Transverse colon (tissue), 4 donors: ENCODE measurements at regions of chr17 and their contacts with region 1.

Region 1: GRCh38 chr17:27601069-27601975 is 29.7 kb upstream of the LGALS9 start:
- DNase-seq: peak; percentile 87
- H3K4me3 ChIP-seq: no peak overlapping the region
- H3K27ac ChIP-seq: no peak overlapping the region
- H3K4me1 ChIP-seq: peaks cover 0 to 19% (median 11%) of the 10 kb centered on the region in 4 donors
- H3K27me3 ChIP-seq: no peaks in the 10 kb centered on the region
- CTCF ChIP-seq: peak; percentile 92 to 96 (median 93)
- EP300 ChIP-seq: no peak
- POLR2A ChIP-seq: no peak

Region 2: DNA sequence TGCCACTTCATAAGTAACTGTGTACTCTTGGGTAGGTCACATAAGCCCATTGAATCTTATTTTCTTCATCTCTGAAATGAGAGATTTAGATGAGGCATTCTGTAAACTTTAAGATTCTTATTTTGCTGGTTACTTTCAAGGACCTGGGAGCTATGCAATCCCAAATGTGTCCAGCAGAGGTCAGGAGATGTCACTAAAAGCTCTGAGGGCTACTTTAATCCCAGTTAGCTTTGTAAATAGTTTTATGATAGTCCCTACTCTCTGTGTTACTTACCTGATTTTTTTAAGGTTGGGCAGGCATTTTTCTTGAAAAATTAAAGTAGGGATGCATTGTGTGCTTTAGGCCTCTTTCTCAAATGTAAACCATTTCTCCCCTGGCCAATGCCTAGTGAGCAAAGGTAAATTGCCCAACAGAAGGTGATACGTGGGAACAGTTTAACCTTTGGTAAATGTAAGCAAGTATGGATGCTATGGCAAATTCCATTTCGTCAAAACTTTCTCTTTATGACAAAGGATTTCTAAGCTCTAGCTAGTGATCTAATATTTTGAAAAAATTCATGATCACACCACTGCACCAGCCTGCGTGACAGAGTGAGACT is 364.5 kb before region 1 on chr17:
- in situ Hi-C with region 1: loop called (anchors 5 to 25 kb)
- intact Hi-C with region 1: loop called (anchors 10 kb)
- DNase-seq: peak; percentile 89
- H3K4me3 ChIP-seq: no peak overlapping the region
- H3K27ac ChIP-seq: no peak overlapping the region
- H3K4me1 ChIP-seq: peaks cover 0 to 17% (median 3%) of the 10 kb centered on the region in 4 donors
- H3K27me3 ChIP-seq: no peaks in the 10 kb centered on the region
- CTCF ChIP-seq: peak; percentile 91 to 94 (median 93)
- EP300 ChIP-seq: no peak
- POLR2A ChIP-seq: no peak

Region 3: DNA sequence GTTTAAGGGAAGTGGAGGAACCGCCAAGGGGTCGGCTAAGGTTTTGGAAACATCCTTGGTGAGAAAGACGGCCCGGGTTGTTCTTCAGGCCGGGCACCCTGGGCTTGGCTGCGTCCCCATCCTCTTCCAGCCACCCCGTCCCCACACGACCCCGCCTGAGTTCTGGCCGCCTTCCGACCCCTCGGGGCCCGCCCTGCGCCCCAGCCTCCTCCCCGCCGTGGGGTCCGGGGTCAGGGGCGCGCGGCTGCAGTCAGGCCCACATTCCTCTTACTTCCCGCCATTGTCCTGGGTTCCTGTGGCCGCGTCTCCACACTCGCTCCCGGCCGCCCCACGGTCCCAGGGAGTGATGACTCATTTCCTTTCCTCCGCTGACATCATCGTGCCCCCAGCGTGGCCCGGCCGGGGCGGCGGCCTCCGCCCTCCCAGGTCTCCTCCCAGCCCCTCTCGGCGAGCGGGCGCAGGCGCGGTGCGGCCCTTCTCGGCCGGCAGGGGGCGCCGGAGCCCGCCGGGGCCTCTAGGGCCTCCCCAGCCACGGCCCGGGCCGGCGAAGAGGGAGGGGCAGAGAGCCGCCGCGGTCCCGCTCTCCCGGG is 247.8 kb before region 1 on chr17:
- in situ Hi-C with region 1: loop called (anchors 5 to 10 kb)
- intact Hi-C with region 1: loop called (anchors 2 kb)
- DNase-seq: peak; percentile 93
- H3K4me3 ChIP-seq: peak overlapping the region; percentile 65 to 84 (median 80)
- H3K27ac ChIP-seq: peak overlapping the region; percentile 92 to 96 (median 94)
- H3K4me1 ChIP-seq: peaks cover 0 to 21% (median 12%) of the 10 kb centered on the region in 4 donors
- H3K27me3 ChIP-seq: no peaks in the 10 kb centered on the region
- CTCF ChIP-seq: peak; percentile 48 to 98 (median 87)
- EP300 ChIP-seq: peak; percentile 41
- POLR2A ChIP-seq: peak; percentile 88

Region 4: GRCh38 chr17:27407916-27408846 is 193.1 kb before region 1 on chr17:
- in situ Hi-C with region 1: no loop called
- intact Hi-C with region 1: no loop called
- DNase-seq: no peak
- H3K4me3 ChIP-seq: no peak overlapping the region
- H3K27ac ChIP-seq: no peak overlapping the region
- H3K4me1 ChIP-seq: peaks cover 0 to 8% (median 4%) of the 10 kb centered on the region in 4 donors
- H3K27me3 ChIP-seq: no peaks in the 10 kb centered on the region
- CTCF ChIP-seq: no peak
- EP300 ChIP-seq: no peak
- POLR2A ChIP-seq: no peak

Region 5: GRCh38 chr17:27455914-27456680 is 145.2 kb before region 1 on chr17 and contains the start of gene KSR1:
- in situ Hi-C with region 1: loop called in 1 of 4 experiments (anchors 25 kb)
- intact Hi-C with region 1: loop called (anchors 5 kb)
- DNase-seq: peak; percentile 89
- H3K4me3 ChIP-seq: peak within 1 kb of the TSS; percentile 78 to 88 (median 84)
- H3K27ac ChIP-seq: peak within 1 kb of the TSS; percentile 77 to 89 (median 84)
- H3K4me1 ChIP-seq: peaks cover 6 to 28% (median 19%) of the 10 kb centered on the region in 4 donors
- H3K27me3 ChIP-seq: peaks cover 11% of the 10 kb centered on the region
- CTCF ChIP-seq: peak in 2 of 5 experiments; percentile 18
- EP300 ChIP-seq: no peak
- POLR2A ChIP-seq: peak; percentile 41
- total RNA-seq, gene KSR1: 8.2 to 55.7 (median 30.9) TPM

Region 6: DNA sequence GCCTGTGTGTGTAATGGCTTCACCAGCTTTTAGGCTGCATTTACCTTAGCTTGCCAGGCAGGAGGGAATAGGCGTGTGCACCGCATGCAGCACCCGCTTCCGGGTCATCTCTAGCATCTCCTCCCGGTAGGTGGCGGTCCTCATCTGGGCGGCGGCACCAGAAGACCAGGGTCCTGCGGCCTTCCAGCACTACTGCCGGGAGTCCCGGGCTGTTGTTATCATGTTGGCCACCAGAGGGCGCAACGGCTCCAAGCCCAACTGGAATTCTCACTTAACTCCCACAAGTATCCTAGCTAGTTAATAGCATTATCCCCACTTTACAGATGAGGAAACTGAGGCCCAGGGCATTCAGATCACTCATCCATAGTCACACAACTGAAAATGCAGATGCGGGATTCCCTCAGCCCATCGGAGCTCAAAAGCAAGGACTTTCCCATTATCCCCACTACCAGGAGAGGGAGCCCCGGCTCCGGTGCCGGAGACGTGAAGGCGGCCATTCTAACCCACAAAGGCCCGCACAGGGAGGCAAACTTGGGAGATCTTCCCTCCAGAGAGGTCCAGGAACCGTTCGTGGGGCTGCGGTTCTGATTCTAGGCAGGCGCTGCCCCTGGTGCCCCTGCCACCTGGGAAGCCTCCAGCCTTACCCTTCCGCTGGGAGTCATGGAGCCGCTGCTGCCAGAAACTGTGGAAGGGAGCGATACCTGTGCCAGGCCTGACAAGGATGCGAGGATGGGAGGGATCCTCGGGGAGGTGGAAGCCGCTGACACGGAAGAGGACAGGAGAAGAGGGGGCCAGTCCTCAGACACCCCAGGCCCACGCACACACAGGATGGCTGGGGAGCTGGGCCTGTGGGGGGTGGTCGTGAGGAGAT is 53.6 kb after region 1 on chr17:
- in situ Hi-C with region 1: loop called (anchors 5 to 10 kb)
- intact Hi-C with region 1: loop called (anchors 2 kb)
- DNase-seq: peak; percentile 79
- H3K4me3 ChIP-seq: no peak overlapping the region
- H3K27ac ChIP-seq: no peak overlapping the region
- H3K4me1 ChIP-seq: no peaks in the 10 kb centered on the region
- H3K27me3 ChIP-seq: no peaks in the 10 kb centered on the region
- CTCF ChIP-seq: peak; percentile 90 to 97 (median 94)
- EP300 ChIP-seq: no peak
- POLR2A ChIP-seq: no peak

Region 7: DNA sequence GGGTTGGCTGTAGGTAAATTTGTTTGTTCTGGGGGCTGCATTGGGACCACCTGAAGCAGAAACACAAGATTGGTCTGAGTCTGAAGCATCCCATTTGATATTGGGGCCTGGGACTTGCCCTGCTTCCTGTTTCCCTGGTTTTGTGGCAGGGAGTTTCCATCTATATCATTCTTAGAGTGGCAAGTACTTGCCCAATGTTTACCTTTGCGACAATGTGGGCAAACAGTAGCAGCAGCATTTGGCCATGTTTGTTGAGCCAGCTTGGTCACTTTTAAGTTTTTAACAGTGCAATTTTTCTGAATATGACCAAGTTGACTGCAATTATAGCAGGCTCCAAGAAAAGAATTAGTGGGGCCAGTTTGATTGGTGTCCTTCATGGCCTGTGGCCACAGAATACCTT is 91.4 kb after region 1 on chr17:
- in situ Hi-C with region 1: no loop called
- intact Hi-C with region 1: no loop called
- DNase-seq: no peak
- H3K4me3 ChIP-seq: no peak overlapping the region
- H3K27ac ChIP-seq: no peak overlapping the region
- H3K4me1 ChIP-seq: no peaks in the 10 kb centered on the region
- H3K27me3 ChIP-seq: no peaks in the 10 kb centered on the region
- CTCF ChIP-seq: no peak
- EP300 ChIP-seq: no peak
- POLR2A ChIP-seq: no peak

Region 8: DNA sequence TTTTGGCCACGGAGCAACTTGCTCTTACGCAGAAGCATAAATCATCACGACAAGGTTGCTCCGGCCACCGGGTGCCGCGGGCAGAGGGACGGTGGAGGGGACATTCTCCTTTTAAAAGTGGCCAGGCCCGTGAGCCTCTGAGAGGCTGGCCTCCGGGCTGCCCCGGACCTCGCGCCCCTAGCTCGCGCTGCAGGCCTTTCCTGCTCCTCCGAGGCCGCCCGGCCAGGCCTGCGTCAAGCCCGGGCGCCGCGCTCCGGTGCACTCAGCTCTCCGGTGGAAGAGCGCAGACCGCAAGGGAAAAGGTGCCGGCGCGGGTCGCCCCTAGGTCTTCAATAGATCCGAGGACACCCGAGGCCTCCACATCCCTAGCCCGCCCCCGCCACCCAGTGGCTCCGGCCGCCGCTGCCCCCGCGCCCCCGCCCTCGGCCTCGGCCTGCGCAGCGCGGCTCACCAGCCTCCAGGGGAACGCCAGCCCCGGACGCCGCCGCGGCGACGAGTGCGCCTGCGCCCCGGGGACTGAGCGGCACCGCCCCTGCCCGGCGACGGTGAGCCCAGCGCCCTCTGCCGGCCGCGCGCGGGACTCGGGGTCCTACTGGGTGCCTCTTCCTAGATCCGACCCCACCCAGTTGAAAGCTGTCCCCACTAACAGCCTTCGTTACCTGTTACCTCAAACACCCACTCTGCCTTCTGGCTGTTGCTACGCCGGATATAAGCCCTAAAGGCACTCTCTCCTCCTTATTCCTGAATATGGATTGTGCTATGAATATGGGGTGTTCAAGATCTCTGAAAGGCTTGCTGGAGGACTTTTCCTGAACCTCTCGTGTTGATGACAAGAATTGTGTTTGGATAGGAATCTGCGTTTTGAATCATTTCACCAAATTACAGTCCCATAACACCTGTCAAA is 291.8 kb after region 1 on chr17 and contains the start of gene LYRM9:
- in situ Hi-C with region 1: loop called in 1 of 4 experiments (anchors 25 kb)
- intact Hi-C with region 1: no loop called
- DNase-seq: peak; percentile 94
- H3K4me3 ChIP-seq: peak within 1 kb of the TSS; percentile 51 to 73 (median 65)
- H3K27ac ChIP-seq: peak within 1 kb of the TSS; percentile 81 to 88 (median 86)
- H3K4me1 ChIP-seq: peaks cover 3 to 12% (median 8%) of the 10 kb centered on the region in 4 donors
- H3K27me3 ChIP-seq: peaks cover 5% of the 10 kb centered on the region
- CTCF ChIP-seq: peak; percentile 67 to 88 (median 85)
- EP300 ChIP-seq: no peak
- POLR2A ChIP-seq: peak; percentile 42
- total RNA-seq, gene LYRM9: 2.6 to 33.0 (median 12.1) TPM